ENCODE measurements at regions of chr12 and their contacts with region 1.

Region 1: DNA sequence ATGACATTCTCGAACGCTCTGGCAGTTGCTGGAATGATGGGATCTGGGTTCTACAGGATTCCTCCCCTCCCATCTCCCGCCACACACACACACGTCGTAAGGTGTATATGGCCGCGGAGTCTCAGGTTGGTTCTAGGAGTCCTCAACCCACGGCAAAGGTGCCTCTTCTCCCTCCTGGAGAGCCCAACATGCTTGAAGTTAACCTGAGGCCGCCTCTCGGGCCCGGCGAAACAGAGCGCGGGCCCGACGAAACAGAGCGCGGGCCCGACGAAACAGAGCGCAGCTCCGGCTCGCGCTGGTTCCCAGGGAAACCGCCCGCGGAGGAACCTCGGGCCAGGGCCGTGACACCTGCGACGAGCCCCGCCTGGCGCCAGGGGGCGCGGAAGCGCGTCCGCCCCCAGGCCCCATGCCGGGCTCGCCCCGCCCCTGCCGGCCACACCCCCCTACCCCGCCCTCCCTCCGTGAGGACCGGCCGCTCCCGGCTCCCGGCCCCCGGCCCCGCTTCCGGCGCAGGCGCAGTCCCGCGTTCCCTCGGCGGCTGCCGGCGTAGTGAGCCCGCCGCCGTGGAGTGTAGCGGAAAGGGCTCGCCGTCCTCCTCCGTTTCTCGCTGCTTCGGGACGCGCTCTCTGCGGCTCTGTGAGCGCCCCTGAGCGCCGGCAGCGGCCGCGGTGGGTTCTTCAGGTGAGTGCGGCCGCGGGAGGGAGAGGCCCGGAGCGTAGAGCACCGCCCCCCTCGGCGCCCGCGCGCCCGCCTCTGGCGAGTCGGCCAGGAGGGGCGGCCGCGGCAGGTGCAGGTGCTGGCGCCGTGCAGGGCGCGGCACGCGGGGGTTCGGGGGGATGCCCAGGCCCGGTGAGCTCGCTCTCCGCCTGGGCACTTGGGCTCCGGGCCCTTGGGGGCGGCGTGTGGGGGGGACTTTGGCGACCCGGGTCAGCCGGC is at the start of gene RAB3IP:
- DNase-seq: peak; percentile 94
- H3K4me3 Mint-ChIP-seq: peak within 1 kb of the TSS; percentile 77
- H3K27ac Mint-ChIP-seq: peak within 1 kb of the TSS; percentile 75
- H3K4me1 Mint-ChIP-seq: peaks cover 18% of the 10 kb centered on the region
- H3K27me3 Mint-ChIP-seq: no peaks in the 10 kb centered on the region
- total RNA-seq, gene RAB3IP: 23.0 to 25.4 TPM

Region 2: DNA sequence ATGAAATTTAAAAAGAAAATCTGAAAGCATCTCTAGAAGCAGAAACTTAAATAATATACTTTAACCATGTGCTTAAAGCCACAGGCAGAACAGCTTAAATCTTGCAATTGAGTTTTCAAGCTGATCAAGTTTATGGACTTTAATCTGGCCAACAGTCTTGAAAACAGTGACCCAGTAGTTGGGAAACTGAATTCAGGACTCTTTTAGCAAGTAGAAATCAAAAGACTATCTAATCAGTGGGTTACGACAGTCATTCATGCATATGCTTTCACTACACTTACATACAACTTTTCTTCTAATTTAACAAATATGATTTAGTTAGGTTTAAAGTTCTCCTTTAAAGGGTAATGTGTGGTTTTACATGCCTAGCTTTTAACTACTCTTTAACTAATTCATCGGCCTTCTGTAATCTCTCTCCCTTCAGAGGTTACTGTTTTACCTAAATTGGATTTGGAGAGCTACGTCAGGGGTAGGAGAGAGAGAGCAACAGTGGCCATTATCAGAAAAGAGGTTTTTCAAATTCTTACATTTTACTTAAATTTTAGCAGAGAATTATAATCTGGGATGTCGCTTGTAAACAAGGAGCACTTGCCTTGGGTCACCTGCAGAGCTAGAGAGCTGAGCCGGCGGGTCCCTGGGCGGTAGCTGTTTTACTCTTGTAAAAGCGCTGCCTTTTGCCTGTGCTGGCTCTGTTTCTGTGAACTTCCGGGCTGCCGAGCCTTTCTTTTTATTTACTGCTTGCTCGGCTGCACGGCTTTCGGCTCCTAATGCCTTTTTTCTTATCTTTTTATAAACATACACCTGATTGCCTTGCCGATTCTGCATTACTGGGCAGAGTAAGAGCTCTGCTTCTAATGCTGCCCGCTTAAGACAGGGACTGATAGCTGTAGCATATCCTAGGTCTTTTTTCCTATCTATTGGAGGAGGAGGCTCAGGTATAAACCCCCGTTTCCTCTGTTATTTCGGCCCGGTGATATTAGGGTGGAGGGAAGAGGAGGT is 407.8 kb before region 1 on chr12:
- CTCF ChIA-PET with region 1: no interaction called
- intact Hi-C with region 1: loop called (anchors 2 kb)
- DNase-seq: peak; percentile 74
- H3K4me3 Mint-ChIP-seq: peak overlapping the region; percentile 80
- H3K27ac Mint-ChIP-seq: peak overlapping the region; percentile 90
- H3K4me1 Mint-ChIP-seq: peaks cover 60% of the 10 kb centered on the region
- H3K27me3 Mint-ChIP-seq: no peaks in the 10 kb centered on the region

Region 3: GRCh38 chr12:69585189-69586062 is 153.2 kb before region 1 on chr12 and contains the start of gene CCT2:
- CTCF ChIA-PET with region 1: no interaction called
- intact Hi-C with region 1: loop called (anchors 1 kb)
- DNase-seq: peak; percentile 97
- H3K4me3 Mint-ChIP-seq: peak within 1 kb of the TSS; percentile 86
- H3K27ac Mint-ChIP-seq: peak within 1 kb of the TSS; percentile 92
- H3K4me1 Mint-ChIP-seq: peaks cover 27% of the 10 kb centered on the region
- H3K27me3 Mint-ChIP-seq: no peaks in the 10 kb centered on the region
- total RNA-seq, gene CCT2: 268 to 280 TPM

Region 4: GRCh38 chr12:69698769-69699540 is 39.7 kb before region 1 on chr12 and contains the start of gene BEST3:
- CTCF ChIA-PET with region 1: no interaction called
- intact Hi-C with region 1: no loop called
- DNase-seq: no peak
- H3K4me3 Mint-ChIP-seq: no peak within 1 kb of the TSS
- H3K27ac Mint-ChIP-seq: no peak within 1 kb of the TSS
- H3K4me1 Mint-ChIP-seq: no peaks in the 10 kb centered on the region
- H3K27me3 Mint-ChIP-seq: peaks cover 2% of the 10 kb centered on the region
- total RNA-seq, gene BEST3: not detected

Region 5: GRCh38 chr12:70365648-70366518 is 627.3 kb after region 1 on chr12 and contains the start of gene KCNMB4:
- CTCF ChIA-PET with region 1: no interaction called
- intact Hi-C with region 1: loop called (anchors 2 kb)
- DNase-seq: peak; percentile 75
- H3K4me3 Mint-ChIP-seq: peak within 1 kb of the TSS; percentile 90
- H3K27ac Mint-ChIP-seq: no peak within 1 kb of the TSS
- H3K4me1 Mint-ChIP-seq: peaks cover 18% of the 10 kb centered on the region
- H3K27me3 Mint-ChIP-seq: peaks cover 10% of the 10 kb centered on the region
- total RNA-seq, gene KCNMB4: 0.54 to 0.60 TPM

Measured in activated naive CD4-positive, alpha-beta T cell treated with anti-CD3 and anti-CD28 coated beads for 36 hours (primary cell).